Gastrocnemius medialis (tissue), 4 donors: ENCODE measurements at regions of chr1 and their contacts with region 1.

Region 1: DNA sequence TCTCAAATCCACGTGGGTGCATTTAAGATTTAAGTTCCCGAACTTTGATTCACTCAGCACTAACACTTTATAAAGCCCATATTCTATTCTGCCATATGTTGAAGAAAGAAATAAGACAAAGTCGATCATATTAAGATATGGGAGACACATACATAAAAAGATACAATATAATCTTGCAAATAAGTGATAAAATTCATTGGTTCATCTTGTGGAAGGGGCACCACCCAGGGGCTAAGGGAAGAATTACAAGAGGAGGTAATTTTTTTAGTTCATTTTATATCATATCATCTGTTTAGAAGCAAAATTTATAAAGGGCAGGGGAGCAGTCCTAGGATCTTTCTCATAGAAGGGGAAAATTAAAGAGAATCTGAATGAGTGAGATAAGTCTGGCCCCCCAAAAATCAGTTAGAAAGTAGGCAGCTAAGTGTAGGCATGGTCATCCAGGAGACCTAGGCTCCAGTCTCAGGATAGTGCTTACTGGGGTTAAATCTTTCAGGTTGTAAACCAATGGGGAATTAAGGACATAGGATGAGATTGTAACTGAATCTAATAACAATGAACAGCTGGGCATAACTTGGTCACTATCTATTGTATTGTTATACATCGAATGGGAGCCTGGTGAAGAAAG is 124.2 kb upstream of the L1TD1 start:
- DNase-seq: no peak
- ATAC-seq: peak; percentile 11 to 23
- H3K4me3 ChIP-seq: peak overlapping the region in 1 of 4 donors; percentile 9
- H3K27ac ChIP-seq: peak overlapping the region; percentile 87 to 96 (median 92)
- H3K4me1 ChIP-seq: peaks cover 35 to 39% of the 10 kb centered on the region in 2 donors
- H3K27me3 ChIP-seq: no peaks in the 10 kb centered on the region
- CTCF ChIP-seq: peak; percentile 57 to 70 (median 60)
- POLR2A ChIP-seq: no peak

Region 2: DNA sequence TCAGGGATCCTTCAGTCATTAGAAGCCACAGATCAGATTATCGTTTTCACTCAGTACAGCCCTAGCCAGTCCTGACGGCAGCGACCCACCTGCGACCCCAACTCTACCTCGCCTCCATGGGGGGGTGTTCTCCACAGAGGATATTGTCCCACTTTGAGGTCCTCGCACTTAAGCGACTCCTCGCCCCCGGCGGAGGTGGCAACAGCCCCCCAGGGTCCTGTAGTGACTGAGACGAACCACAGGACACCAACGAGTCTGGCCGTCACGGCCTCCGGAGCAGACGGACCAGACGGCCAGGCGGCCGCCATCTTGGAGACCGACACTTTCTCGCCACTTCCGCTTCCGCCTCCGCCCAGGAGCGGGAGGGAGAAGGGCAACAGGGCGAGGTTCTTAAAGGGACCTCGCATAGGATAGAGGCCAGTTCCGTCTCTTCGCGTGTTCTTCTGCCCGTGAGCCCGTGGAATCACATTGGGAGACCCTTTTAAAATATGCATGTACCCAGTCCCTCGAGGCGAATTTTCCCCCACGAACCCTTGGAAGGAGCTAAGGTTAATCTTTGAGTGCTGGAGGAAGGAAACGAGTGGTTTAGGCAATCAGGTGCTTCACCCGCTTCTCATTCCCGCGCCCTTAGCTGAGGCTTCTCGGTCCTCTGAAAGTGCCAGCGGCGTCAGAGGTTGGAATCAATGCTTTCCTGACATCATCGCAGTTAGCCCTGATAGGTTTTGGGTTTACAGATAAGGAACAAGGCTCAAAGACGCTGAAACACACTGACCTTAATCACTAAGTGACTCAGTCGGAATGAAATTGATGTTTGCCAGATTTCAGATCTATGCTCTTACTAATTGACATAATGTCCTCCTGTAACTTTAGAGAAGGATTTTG is 345.4 kb before region 1 on chr1 and contains the start of gene TM2D1:
- in situ Hi-C with region 1: no loop called
- intact Hi-C with region 1: loop called (anchors 10 kb)
- DNase-seq: peak; percentile 81 to 85
- ATAC-seq: peak; percentile 99
- H3K4me3 ChIP-seq: peak within 1 kb of the TSS; percentile 86 to 98 (median 96)
- H3K27ac ChIP-seq: peak within 1 kb of the TSS; percentile 91 to 96 (median 94)
- H3K4me1 ChIP-seq: peaks cover 17 to 18% of the 10 kb centered on the region in 2 donors
- H3K27me3 ChIP-seq: no peaks in the 10 kb centered on the region
- CTCF ChIP-seq: no peak
- POLR2A ChIP-seq: peak; percentile 64 to 77
- total RNA-seq, gene TM2D1: 33.6 to 56.8 (median 38.5) TPM

Region 3: DNA sequence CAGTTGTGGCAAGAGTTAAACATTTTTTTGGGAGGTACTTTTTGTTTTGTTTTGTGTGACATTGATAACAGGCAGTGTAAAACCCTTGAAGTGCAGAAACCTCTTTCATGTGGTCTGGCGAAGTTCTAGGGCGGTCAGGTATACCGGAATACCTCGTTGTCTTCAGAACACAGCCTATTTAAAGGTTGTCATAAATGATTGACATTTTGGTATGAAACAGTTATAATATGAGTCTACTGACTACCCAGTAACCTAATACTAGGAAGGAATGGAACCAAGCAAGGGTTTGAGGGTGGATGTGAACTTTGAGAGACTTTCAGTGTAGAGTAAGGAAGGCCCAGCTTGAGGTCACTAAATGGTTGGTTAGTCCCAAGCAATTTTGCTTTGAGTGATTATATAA is 287.7 kb before region 1 on chr1:
- in situ Hi-C with region 1: no loop called
- intact Hi-C with region 1: no loop called
- DNase-seq: no peak
- ATAC-seq: no peak
- H3K4me3 ChIP-seq: no peak overlapping the region
- H3K27ac ChIP-seq: no peak overlapping the region
- H3K4me1 ChIP-seq: peaks cover 4 to 5% of the 10 kb centered on the region in 2 donors
- H3K27me3 ChIP-seq: no peaks in the 10 kb centered on the region
- CTCF ChIP-seq: no peak
- POLR2A ChIP-seq: no peak

Region 4: DNA sequence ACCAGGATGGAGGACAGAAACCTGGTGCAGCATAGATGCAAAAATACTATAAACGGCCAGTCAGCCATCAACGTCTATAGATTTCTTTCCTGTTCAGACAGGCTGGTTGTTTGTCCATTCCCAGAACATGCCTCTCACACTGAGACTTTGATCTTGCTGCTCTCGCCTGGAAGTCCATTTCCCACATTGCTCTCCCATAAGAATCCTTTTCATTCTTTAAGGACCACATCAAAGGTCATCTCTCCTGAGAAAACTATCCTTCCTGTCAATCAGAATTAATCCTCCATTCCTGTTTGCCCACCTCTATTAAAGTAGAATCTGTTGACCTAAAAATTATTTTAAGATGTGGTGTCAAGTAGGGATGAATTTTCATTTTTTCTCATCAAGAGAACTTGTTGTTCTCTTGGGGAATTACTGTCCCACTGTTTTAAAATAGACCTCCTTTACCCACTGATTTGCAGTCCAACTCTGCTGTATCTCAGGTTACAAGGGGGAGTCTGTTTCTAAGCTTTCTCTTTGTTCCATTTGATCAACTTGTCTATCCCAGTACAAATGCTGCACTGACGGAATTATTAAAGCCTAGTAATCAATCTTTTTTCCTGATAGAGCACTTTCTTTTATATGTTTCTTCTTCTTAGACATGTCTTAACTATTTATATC is 155.5 kb before region 1 on chr1:
- in situ Hi-C with region 1: no loop called
- intact Hi-C with region 1: loop called (anchors 10 kb)
- DNase-seq: no peak
- ATAC-seq: peak; percentile 37 to 40
- H3K4me3 ChIP-seq: peak overlapping the region in 1 of 4 donors; percentile 14
- H3K27ac ChIP-seq: peak overlapping the region in 3 of 4 donors; percentile 14 to 70 (median 70)
- H3K4me1 ChIP-seq: peaks cover 5 to 24% of the 10 kb centered on the region in 2 donors
- H3K27me3 ChIP-seq: no peaks in the 10 kb centered on the region
- CTCF ChIP-seq: no peak
- POLR2A ChIP-seq: no peak

Region 5: DNA sequence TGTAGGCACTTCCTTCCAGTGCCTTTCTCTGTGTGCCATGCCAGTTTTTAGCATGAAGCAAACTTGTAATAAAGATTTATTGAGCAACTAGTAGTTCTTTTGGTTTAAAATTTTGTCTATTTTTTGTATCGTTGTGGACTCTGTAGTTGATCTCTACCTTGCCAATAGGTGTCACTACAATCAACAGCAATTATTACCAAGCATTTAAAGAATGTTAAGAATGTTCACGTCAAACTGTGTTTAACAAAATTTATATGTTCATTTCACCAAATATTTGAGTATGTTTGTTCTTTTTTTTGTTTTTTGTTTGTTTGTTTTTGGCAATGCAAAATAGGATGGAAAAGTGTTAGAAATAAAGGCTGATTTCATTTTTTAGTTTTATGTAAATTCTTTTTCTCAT is 120.1 kb before region 1 on chr1:
- in situ Hi-C with region 1: no loop called
- intact Hi-C with region 1: loop called (anchors 5 kb)
- DNase-seq: no peak
- ATAC-seq: no peak
- H3K4me3 ChIP-seq: no peak overlapping the region
- H3K27ac ChIP-seq: no peak overlapping the region
- H3K4me1 ChIP-seq: peaks cover 15 to 26% of the 10 kb centered on the region in 2 donors
- H3K27me3 ChIP-seq: no peaks in the 10 kb centered on the region
- CTCF ChIP-seq: peak in 2 of 5 experiments; percentile 18 to 28
- POLR2A ChIP-seq: no peak

Region 6: GRCh38 chr1:61973100-61973837 is 97.2 kb before region 1 on chr1:
- in situ Hi-C with region 1: no loop called
- intact Hi-C with region 1: loop called (anchors 5 kb)
- DNase-seq: peak in 1 of 2 donors; percentile 27
- ATAC-seq: peak; percentile 74 to 83
- H3K4me3 ChIP-seq: peak overlapping the region in 1 of 4 donors; percentile 28
- H3K27ac ChIP-seq: peak overlapping the region; percentile 6 to 83 (median 61)
- H3K4me1 ChIP-seq: peaks cover 31 to 35% of the 10 kb centered on the region in 2 donors
- H3K27me3 ChIP-seq: no peaks in the 10 kb centered on the region
- CTCF ChIP-seq: no peak
- POLR2A ChIP-seq: no peak

Region 7: DNA sequence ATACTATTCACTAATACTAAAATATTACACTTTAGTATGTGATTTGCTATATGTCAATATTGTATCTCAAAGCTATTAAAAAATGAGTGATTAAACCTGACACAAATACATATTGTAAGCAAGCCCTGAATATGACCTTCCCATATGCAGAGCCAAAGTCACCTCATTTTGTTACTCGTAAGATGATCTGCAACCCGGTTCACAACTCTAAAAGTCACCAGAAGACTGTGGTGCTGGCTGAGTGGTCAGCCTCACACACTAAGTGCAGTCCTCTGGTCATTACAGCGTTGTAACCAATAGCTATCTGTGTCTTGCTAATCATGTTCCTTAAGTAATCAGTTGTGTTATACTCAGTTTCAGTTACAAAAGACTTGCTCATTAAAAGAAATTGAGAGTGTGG is 73.4 kb before region 1 on chr1:
- in situ Hi-C with region 1: no loop called
- intact Hi-C with region 1: no loop called
- DNase-seq: no peak
- ATAC-seq: peak in 1 of 2 donors; percentile 66
- H3K4me3 ChIP-seq: no peak overlapping the region
- H3K27ac ChIP-seq: peak overlapping the region in 1 of 4 donors; percentile 22
- H3K4me1 ChIP-seq: peaks cover 0 to 2% of the 10 kb centered on the region in 2 donors
- H3K27me3 ChIP-seq: no peaks in the 10 kb centered on the region
- CTCF ChIP-seq: no peak
- POLR2A ChIP-seq: no peak

Region 8: DNA sequence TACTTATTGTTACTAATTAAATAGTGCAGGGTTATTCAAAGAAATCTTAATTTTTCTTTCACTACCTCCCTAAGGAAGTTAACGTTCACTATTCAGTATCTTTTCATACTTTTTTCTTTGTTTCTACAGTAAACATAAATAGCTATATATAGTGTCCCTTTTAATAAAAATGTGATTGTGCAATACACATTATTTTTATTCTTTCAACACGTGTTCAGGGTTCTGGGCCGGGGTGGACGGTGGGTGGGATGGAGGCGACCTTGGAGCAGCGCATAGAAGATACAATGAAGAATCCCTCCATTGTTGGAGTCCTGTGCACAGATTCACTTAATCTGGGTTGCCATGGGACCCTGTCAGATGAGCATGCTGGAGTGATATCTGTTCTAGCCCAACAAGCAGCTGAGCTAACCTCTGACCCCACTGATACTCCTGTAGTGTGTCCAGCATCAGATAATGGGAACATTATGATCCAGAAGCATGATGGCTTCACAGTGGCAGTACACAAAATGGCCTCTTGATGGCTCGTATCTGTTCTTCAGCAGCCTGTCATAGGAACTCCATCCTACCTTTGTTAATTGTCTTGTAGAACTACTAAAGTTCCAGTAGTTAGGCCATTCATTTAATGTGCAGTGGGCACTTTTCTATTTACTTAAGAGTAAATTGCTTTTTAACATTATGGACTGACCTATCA is 31.8 kb before region 1 on chr1:
- in situ Hi-C with region 1: no loop called
- intact Hi-C with region 1: no loop called
- DNase-seq: no peak
- ATAC-seq: no peak
- H3K4me3 ChIP-seq: no peak overlapping the region
- H3K27ac ChIP-seq: no peak overlapping the region
- H3K4me1 ChIP-seq: peaks cover 8 to 13% of the 10 kb centered on the region in 2 donors
- H3K27me3 ChIP-seq: no peaks in the 10 kb centered on the region
- CTCF ChIP-seq: no peak
- POLR2A ChIP-seq: no peak